ENCODE measurements at regions of chr18 and their contacts with region 1.

Region 1: DNA sequence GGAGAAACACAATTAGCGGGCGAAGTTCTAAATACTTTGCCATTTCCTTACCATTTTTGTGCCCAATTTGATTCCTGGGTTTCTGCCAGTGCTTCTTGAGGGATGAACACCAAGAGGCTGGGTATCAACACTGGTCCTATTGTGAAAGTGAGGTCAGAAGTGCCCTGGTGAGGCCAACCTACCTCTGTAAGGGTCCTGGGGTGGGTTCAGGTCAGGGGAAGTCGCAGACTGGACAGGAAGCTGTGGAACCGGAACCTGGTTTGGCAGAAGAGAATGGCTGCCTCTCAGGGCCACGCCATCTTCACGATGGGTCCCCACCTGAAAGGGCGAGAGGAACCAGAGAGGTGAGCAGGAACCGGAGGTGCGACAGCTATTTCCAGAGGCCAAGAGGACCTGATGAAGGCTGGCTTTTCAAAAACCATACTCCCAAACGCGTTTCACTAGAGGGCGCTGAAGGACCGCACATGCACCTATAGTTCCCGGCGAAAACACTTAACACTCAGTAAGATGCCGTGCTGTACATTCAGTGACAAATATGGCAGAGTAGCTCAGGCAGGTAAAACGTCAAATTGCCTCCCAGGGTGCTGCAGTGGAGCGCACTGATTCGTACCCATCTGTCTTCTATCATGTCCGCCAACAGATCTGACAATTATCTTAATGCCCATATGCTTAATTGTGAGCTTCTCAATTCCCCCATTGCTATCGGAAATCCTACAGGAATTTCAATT is 275.3 kb upstream of the CCDC68 start:
- DNase-seq: peak; percentile 85
- ATAC-seq: peak; percentile 75
- H3K4me3 ChIP-seq: no peak overlapping the region
- H3K4me3 Mint-ChIP-seq: peak overlapping the region; percentile 24
- H3K27ac ChIP-seq: peak overlapping the region in 1 of 2 donors; percentile 73
- H3K27ac Mint-ChIP-seq: peak overlapping the region; percentile 90
- H3K4me1 ChIP-seq: peaks cover 10 to 17% of the 10 kb centered on the region in 2 donors
- H3K4me1 Mint-ChIP-seq: peaks cover 39% of the 10 kb centered on the region
- H3K27me3 ChIP-seq: no peaks in the 10 kb centered on the region
- H3K27me3 Mint-ChIP-seq: no peaks in the 10 kb centered on the region
- CTCF ChIP-seq: peak; percentile 91

Region 2: DNA sequence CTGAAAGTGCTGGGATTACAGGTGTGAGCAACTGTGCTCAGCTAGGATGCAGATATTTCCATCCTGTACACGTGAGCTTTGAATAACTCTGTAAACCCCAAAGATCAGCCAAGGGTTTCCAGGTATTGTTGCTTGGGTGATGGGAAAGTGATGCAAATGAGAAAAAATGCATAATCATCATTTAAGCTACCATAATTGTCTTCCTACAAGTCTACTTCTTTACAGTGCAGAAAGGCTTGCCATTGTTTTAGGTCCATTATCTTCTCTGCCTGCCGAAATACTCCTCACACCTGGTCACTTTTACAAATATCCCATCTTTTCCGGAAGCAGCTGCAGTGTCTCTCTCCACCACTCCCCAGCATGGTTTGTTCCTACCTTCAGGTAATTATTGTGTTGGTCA is 15.5 kb before region 1 on chr18:
- CTCF ChIA-PET with region 1: interaction called, 13 read pairs
- POLR2A ChIA-PET with region 1: no interaction called
- intact Hi-C with region 1: no loop called
- DNase-seq: no peak
- ATAC-seq: no peak
- H3K4me3 ChIP-seq: no peak overlapping the region
- H3K4me3 Mint-ChIP-seq: no peak overlapping the region
- H3K27ac ChIP-seq: no peak overlapping the region
- H3K27ac Mint-ChIP-seq: peak overlapping the region; percentile 48
- H3K4me1 ChIP-seq: peaks cover 29 to 30% of the 10 kb centered on the region in 2 donors
- H3K4me1 Mint-ChIP-seq: peaks cover 31% of the 10 kb centered on the region
- H3K27me3 ChIP-seq: peaks cover 0 to 4% (median 0%) of the 10 kb centered on the region in 4 experiments
- H3K27me3 Mint-ChIP-seq: no peaks in the 10 kb centered on the region
- CTCF ChIP-seq: no peak

Region 3: GRCh38 chr18:55265984-55266383 is 31.5 kb after region 1 on chr18:
- CTCF ChIA-PET with region 1: interaction called, 57 read pairs
- POLR2A ChIA-PET with region 1: no interaction called
- intact Hi-C with region 1: no loop called
- DNase-seq: peak; percentile 58
- ATAC-seq: peak; percentile 31
- H3K4me3 ChIP-seq: peak overlapping the region in 2 of 5 experiments; percentile 8 to 26
- H3K4me3 Mint-ChIP-seq: peak overlapping the region; percentile 69
- H3K27ac ChIP-seq: peak overlapping the region; percentile 84 to 94
- H3K27ac Mint-ChIP-seq: peak overlapping the region; percentile 91
- H3K4me1 ChIP-seq: peaks cover 59 to 63% of the 10 kb centered on the region in 2 donors
- H3K4me1 Mint-ChIP-seq: peaks cover 69% of the 10 kb centered on the region
- H3K27me3 ChIP-seq: no peaks in the 10 kb centered on the region
- H3K27me3 Mint-ChIP-seq: no peaks in the 10 kb centered on the region
- CTCF ChIP-seq: no peak

Region 4: DNA sequence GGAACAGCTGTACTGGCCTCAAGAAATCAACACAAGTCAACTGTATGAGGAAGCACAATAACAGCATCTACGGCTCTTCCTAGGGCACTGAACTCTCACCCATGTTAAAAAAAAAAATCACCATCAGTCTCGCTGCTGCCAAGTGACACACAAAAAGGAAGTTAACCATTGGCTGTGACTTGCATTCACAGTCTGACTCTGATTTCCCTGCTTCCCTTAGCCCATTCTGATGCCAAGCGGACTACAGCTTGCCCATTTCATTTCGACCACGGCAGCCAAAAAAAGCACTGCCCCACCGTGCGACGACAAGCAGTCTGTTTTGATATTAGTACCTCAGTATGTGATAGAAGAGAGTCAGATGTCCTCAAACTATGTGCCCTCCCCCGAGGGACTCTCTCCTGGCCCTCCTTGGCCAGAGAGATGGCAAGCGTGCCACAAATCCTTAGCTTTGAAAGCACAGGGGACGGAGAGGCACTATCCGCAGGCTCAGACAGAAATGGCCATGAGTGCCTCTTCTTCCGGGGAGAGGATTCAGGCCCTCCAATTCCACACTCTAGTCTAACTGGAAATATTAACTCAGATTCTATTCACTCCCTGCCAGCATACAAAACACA is 103.5 kb after region 1 on chr18:
- CTCF ChIA-PET with region 1: interaction called, 18 read pairs
- POLR2A ChIA-PET with region 1: no interaction called
- intact Hi-C with region 1: loop called (anchors 5 kb)
- DNase-seq: peak; percentile 66
- ATAC-seq: peak; percentile 76
- H3K4me3 ChIP-seq: peak overlapping the region in 3 of 5 experiments; percentile 8 to 56 (median 24)
- H3K4me3 Mint-ChIP-seq: peak overlapping the region; percentile 87
- H3K27ac ChIP-seq: peak overlapping the region; percentile 56 to 84
- H3K27ac Mint-ChIP-seq: peak overlapping the region; percentile 88
- H3K4me1 ChIP-seq: peaks cover 23 to 27% of the 10 kb centered on the region in 2 donors
- H3K4me1 Mint-ChIP-seq: peaks cover 35% of the 10 kb centered on the region
- H3K27me3 ChIP-seq: no peaks in the 10 kb centered on the region
- H3K27me3 Mint-ChIP-seq: no peaks in the 10 kb centered on the region
- CTCF ChIP-seq: no peak

Region 5: DNA sequence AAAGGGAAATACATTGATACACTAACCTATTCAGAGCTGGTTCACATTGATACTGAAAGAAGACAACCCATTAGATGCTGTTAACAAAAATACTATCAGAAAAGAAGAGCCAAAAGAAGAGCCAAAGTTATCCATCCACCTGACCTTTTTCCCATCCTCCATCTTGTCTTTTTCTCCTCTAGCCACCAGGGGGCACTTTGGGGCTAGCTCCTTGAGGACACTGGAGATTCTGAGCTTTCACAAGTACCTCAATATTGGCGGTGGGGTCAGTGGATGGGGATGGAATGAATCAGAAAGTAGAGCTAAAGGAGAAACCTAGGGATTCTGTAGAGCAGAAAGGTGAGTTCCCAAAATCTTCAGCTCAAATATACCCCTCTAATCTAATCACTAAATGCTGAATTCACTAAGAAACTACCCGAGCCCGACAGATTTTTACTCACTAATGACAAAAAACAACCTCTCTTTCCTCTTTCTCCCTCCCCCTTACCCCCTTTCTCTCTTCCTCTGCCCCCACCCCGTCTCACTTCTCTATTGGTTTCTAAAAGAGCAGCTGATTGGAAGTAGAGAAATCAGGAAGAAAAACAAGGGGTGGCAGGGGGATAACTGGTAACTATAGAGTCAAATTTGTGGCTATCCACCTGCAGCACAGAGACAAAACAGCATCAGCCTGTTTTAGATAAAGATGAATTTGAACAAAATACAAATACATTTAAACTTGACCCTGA is 150.2 kb after region 1 on chr18:
- CTCF ChIA-PET with region 1: interaction called, 10 read pairs
- POLR2A ChIA-PET with region 1: no interaction called
- intact Hi-C with region 1: no loop called
- DNase-seq: peak; percentile 62
- ATAC-seq: peak; percentile 53
- H3K4me3 ChIP-seq: peak overlapping the region in 3 of 5 experiments; percentile 10 to 19 (median 17)
- H3K4me3 Mint-ChIP-seq: peak overlapping the region; percentile 67
- H3K27ac ChIP-seq: peak overlapping the region; percentile 49 to 76
- H3K27ac Mint-ChIP-seq: peak overlapping the region; percentile 83
- H3K4me1 ChIP-seq: peaks cover 25% of the 10 kb centered on the region in 2 donors
- H3K4me1 Mint-ChIP-seq: peaks cover 41% of the 10 kb centered on the region
- H3K27me3 ChIP-seq: no peaks in the 10 kb centered on the region
- H3K27me3 Mint-ChIP-seq: no peaks in the 10 kb centered on the region
- CTCF ChIP-seq: peak; percentile 74

Region 6: GRCh38 chr18:56575819-56576663 is 1341.5 kb after region 1 on chr18:
- CTCF ChIA-PET with region 1: interaction called, 29 read pairs
- POLR2A ChIA-PET with region 1: no interaction called
- intact Hi-C with region 1: loop called (anchors 1 kb)
- DNase-seq: peak; percentile 68
- ATAC-seq: peak; percentile 54
- H3K4me3 ChIP-seq: no peak overlapping the region
- H3K4me3 Mint-ChIP-seq: no peak overlapping the region
- H3K27ac ChIP-seq: no peak overlapping the region
- H3K27ac Mint-ChIP-seq: no peak overlapping the region
- H3K4me1 ChIP-seq: no peaks in the 10 kb centered on the region
- H3K4me1 Mint-ChIP-seq: no peaks in the 10 kb centered on the region
- H3K27me3 ChIP-seq: no peaks in the 10 kb centered on the region
- H3K27me3 Mint-ChIP-seq: no peaks in the 10 kb centered on the region
- CTCF ChIP-seq: peak; percentile 83